ENCODE measurements at regions of chr17 and their contacts with region 1.

Region 1: DNA sequence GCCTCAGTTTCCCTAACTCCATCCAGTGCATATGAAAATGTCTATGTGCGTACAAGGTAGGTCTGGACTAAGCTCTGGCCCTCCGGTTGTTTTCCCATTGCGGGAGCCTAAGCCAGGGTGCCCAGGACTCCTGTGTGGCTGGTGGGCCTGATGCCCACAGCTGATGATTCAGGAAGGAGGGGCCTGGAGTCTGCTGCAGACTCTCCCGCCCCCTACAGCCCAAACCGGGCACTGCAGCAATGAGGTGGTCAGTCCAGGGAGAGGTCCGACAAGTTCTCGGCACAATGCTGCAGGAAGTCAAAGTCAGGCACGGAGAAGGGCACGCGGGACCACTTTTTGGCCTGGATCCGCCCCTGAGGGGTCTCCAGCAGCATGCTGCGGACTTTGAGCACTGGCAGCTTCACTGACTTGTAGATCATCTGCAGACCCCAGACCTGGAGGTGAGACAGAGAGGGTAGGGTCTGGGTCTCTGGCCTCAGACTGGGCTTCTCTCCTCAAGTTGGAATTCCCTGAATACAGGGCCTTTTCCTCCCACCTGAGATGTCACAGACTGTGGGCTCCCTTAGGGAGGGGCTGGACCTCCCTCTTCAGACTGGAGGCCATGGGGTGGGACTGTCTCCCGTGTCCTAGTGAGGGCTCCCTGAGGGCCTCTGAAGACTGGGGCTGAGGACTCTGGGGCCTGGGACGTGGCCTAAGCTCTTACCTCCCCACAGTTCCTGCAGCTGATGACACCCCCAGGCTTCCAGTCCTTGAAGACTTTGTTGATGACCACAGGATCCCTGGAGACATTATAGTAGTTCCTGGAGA is 3.4 kb upstream of the ZNF385C start:
- DNase-seq: peak; percentile 97
- ATAC-seq: peak; percentile 84
- H3K4me3 Mint-ChIP-seq: no peak overlapping the region
- H3K27ac Mint-ChIP-seq: no peak overlapping the region
- H3K4me1 Mint-ChIP-seq: peaks cover 19% of the 10 kb centered on the region
- H3K27me3 Mint-ChIP-seq: peaks cover 25% of the 10 kb centered on the region
- CTCF ChIP-seq: peak; percentile 98

Region 2: DNA sequence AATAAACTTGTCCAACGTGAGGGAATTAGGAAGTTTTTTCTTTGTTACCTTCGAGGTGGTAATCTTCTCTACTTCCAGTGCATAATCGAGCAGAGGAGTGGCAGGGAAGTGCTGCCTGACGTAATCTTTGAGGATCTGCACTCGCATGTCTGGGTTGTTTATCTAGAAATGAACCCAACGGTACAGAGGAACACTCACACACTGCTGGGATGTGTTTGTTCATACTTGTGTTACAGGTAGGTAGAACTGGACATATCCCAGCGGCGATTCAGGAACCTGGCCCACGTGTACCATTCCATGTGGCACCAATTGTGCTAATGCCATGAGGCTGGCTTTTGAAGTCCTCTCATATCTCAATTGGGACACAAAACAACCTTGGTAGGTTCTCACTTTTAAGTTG is 232.3 kb before region 1 on chr17:
- CTCF ChIA-PET with region 1: no interaction called
- POLR2A ChIA-PET with region 1: no interaction called
- DNase-seq: no peak
- ATAC-seq: no peak
- H3K4me3 Mint-ChIP-seq: no peak overlapping the region
- H3K27ac Mint-ChIP-seq: no peak overlapping the region
- H3K4me1 Mint-ChIP-seq: peaks cover 3% of the 10 kb centered on the region; the same call in 1 of the 2 replicates
- H3K27me3 Mint-ChIP-seq: no peaks in the 10 kb centered on the region
- CTCF ChIP-seq: no peak

Region 3: DNA sequence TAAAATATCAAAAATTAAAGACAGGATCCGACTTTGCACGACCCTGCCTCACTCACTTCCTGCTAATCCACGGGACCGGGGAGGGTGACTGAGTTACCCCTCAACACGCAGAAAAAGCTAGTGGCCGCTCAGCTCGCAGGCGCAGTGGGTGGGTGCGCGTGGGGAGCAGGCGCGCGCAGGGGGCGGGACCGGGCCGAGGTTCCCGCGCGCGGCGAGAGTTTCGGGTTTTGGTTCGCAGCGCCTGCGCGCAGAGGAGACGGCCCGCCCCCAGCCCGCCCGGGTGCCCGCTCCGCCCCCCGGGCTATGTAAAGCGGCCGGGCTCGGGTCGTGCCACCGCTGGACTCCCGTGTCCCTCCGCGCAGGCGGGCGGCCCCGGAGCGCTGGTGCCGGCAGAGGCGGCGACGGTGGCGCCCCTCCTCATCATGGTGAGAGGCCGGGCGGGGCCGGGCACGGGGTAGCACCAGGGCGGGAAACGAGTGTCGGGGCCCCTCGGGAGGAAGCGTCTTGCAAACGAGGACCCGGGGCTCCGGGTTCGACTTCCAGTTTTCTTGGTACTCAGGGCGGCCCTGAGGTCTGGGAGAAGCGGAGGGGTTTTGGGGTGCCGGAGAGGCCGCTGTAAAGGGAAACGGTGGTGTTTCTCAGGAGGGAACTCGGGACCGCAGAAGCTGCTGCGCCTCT is 135.1 kb before region 1 on chr17 and contains the start of gene CNP:
- CTCF ChIA-PET with region 1: interaction called, 14 read pairs
- POLR2A ChIA-PET with region 1: no interaction called
- DNase-seq: peak; percentile 85
- ATAC-seq: peak; percentile 27
- H3K4me3 Mint-ChIP-seq: peak within 1 kb of the TSS; percentile 84
- H3K27ac Mint-ChIP-seq: peak within 1 kb of the TSS; percentile 94
- H3K4me1 Mint-ChIP-seq: peaks cover 18% of the 10 kb centered on the region
- H3K27me3 Mint-ChIP-seq: peaks cover 9% of the 10 kb centered on the region
- CTCF ChIP-seq: no peak
- total RNA-seq, gene CNP: 52.5 to 54.2 TPM (median 53.9 TPM) in 3 replicates

Region 4: DNA sequence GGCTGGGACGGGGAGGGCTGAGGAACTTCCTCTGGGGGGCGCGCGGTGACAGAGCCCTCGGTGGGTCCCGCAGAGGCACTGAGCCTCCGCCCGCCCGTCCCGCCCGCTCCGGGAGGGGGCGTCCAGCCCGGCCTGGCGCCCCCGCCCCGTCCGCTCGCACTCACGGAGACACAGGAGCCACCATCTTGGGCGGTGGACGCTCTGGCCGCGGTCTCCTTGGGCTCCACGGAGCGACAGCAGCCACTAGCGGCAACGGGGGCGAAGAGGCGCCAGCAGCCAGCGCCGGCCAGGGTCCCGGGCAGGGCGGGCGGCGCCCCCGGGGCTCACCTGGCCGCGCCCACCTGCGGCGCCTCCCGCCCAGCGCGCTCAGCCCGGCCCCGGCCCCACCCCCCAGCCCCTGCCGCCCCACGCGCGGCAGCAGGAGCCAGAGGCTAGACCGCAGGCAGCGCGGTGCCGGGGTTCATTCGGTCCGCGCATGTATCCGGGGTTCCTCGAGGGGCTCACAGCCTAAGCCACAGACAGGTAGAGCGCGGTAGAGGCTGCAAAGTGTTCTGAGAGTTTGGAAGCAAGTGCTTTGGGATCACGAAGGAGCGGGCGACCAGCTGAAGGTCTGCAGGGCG is 51.2 kb before region 1 on chr17 and contains the start of gene C17orf113:
- CTCF ChIA-PET with region 1: interaction called, 25 read pairs
- POLR2A ChIA-PET with region 1: no interaction called
- DNase-seq: peak; percentile 75
- ATAC-seq: peak; percentile 72
- H3K4me3 Mint-ChIP-seq: peak within 1 kb of the TSS; percentile 76
- H3K27ac Mint-ChIP-seq: no peak within 1 kb of the TSS
- H3K4me1 Mint-ChIP-seq: peaks cover 46% of the 10 kb centered on the region
- H3K27me3 Mint-ChIP-seq: peaks cover 9% of the 10 kb centered on the region
- CTCF ChIP-seq: no peak
- total RNA-seq, gene C17orf113: 1.9 to 2.8 TPM (median 2.5 TPM) in 3 replicates

Region 5: DNA sequence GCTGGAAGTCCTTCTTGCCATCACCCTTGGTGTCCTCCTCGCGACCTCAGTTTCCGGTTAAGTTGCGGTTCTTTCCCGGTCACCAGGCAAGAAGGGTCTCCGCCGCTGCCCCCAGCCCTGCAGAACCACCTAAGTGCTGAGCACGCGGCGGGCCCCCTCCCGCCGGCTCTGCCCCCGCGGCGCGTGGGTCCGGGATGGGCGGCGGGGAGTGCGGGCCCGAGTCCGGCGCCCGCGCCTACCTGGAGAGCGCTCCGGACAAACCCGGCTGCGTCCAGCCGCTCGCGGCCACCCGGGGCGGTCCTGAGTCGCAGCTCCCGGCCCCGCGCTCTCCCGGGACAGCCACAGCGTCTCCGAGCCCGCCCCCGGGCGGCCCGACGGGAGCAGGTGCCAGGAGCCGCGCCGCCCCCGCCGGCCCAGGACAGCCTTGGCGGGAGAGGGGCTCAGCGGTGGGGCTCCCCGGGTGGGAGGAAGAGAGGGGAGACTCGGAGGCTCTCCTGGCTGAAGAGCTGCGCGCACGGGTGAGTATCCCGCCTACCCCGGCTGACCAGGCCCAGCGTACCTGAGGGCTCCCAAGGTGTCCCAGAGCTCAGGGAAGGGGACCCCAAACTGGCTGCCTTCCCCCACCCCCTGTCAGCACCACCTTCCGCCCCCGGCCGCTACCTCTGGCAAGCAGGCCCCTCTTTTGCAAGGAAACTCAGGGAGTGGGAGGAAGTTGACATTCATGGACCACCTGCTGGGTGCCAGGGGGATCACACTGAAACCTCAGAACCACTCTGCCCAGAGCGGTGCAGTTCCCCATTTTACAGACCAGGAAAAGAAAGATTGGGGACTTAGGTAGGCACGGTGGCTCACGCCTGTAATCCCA is 29.2 kb before region 1 on chr17:
- CTCF ChIA-PET with region 1: interaction called, 49 read pairs
- POLR2A ChIA-PET with region 1: no interaction called
- DNase-seq: peak; percentile 52
- ATAC-seq: peak; percentile 30
- H3K4me3 Mint-ChIP-seq: peak overlapping the region; percentile 77
- H3K27ac Mint-ChIP-seq: no peak overlapping the region
- H3K4me1 Mint-ChIP-seq: peaks cover 10% of the 10 kb centered on the region
- H3K27me3 Mint-ChIP-seq: peaks cover 11% of the 10 kb centered on the region
- CTCF ChIP-seq: no peak

Region 6: GRCh38 chr17:42112552-42113176 is 10.9 kb after region 1 on chr17 and contains the start of gene DHX58:
- CTCF ChIA-PET with region 1: interaction called, 27 read pairs
- POLR2A ChIA-PET with region 1: no interaction called
- DNase-seq: no peak
- ATAC-seq: peak; percentile 2; the same call in 1 of the 2 replicates
- H3K4me3 Mint-ChIP-seq: no peak within 1 kb of the TSS
- H3K27ac Mint-ChIP-seq: peak within 1 kb of the TSS; percentile 22
- H3K4me1 Mint-ChIP-seq: peaks cover 17% of the 10 kb centered on the region
- H3K27me3 Mint-ChIP-seq: no peaks in the 10 kb centered on the region
- CTCF ChIP-seq: no peak
- total RNA-seq, gene DHX58: 6.3 to 7.6 TPM (median 7.3 TPM) in 3 replicates

Region 7: DNA sequence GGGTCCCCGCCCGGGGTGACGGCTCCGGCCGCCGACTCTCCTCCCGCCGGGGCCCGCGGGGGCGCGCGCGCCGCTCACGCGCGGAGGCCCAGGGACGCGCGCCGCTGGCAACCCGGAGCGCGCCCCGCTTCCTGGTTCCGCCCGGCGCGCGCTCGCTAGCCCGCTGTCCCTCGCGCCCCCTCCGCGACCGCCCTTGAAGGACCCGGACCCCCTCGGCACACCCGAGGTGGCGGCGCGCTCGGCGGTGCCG is 174.6 kb after region 1 on chr17 and contains the start of gene STAT5B:
- CTCF ChIA-PET with region 1: no interaction called
- POLR2A ChIA-PET with region 1: no interaction called
- DNase-seq: peak; percentile 68
- ATAC-seq: peak; percentile 57; the same call in 1 of the 2 replicates
- H3K4me3 Mint-ChIP-seq: peak within 1 kb of the TSS; percentile 86
- H3K27ac Mint-ChIP-seq: peak within 1 kb of the TSS; percentile 72
- H3K4me1 Mint-ChIP-seq: peaks cover 50% of the 10 kb centered on the region
- H3K27me3 Mint-ChIP-seq: peaks cover 6% of the 10 kb centered on the region
- CTCF ChIP-seq: no peak
- total RNA-seq, gene STAT5B: 36.4 to 42.2 TPM (median 37.9 TPM) in 3 replicates